AG04450 (cell line): ENCODE measurements at regions of chr7 and their contacts with region 1.

Region 1: DNA sequence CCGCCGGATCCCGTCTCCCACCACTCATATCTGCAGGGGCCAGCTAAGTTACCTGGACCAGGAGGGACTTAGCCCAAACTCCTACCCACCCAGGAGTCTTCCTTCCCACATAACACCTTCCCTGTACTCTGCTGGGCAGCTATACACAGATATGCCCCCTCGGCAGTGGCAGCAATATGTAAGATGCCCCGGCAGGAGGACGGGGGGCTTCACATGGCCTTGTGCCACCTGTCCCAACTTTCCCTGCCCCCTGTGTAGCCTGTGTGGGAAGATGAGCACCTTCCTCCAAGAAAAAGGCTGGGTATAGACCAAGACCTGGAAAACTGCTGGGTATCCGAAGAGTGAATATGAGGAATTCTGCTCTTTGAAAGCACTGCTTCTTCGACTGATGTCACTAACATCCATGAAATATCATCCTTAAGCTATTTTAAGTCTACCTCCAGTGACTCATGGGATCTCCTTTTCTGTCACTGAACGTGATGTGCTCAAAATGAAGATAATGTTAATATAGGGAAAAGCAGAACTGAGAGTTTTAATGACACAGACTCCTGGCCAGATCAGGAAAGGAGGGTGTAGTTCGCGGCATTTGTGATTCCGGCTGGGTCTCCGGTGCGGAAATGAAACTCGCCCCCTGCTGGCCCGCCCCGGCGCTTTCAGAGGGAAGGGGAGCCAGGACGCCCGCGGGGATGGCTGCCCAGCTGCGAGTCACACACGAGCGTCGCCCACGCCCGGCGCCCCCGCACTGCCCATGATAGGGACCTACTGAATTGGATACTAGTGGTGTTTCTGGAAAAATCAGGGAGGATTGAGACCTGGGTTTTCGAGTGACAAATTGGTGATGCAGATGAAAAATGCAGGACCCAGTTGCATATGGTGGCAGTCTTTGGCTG is 256.9 kb upstream of the NFE2L3 start:
- DNase-seq: no peak
- H3K4me3 ChIP-seq: no peak overlapping the region
- H3K27ac ChIP-seq: no peak overlapping the region
- H3K27me3 ChIP-seq: peaks cover 17% of the 10 kb centered on the region
- CTCF ChIP-seq: peak; percentile 70

Region 2: DNA sequence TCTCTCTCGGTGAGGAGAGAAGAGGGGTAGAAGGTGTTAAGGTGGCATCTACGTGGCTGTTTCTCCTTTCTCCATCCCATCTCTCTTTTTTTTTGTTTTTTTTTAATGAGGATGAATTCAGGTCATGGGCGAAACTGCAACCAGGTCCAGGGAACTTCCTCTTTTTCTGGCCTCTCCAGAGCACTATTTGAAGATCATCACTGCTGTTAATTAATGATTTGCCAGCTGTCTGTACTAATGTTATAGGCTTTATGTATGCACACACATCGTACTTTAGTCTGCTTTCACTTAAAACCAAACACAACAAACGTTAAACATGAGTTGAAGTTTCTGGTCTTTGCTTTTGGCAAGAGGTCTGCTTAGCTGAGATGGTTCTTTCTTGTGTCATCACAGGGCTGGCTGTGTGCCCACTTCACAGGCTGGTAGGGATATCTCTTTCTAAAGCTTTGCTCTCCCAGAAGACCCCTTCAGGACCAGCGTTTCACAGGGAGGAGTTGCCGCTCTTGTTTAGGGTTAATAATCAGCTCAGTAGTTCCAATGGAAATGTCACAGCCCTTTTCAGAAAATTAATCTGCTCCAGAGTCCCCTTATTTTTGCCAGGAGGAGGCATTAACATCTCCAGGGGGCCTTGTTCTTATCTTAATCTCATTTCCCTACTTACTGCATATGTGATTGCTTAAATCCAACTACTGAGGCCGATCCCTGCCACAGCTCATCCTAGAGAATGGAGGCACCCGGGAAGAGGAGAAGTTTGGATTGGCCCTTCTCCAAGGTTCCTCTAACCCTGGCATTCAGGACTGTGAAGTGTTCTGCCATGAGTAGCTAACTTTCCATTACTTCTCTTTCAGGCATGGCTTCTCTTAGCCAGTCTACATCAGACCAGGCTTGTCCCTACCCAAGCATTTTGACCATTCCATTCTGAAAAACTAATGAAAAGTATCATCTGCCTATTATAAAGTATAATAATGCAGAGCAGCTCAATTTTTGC is 17.1 kb before region 1 on chr7:
- CTCF ChIA-PET with region 1: interaction called, 92 read pairs
- POLR2A ChIA-PET with region 1: no interaction called
- DNase-seq: no peak
- H3K4me3 ChIP-seq: no peak overlapping the region
- H3K27ac ChIP-seq: no peak overlapping the region
- H3K27me3 ChIP-seq: peaks cover 33% of the 10 kb centered on the region
- CTCF ChIP-seq: no peak

Region 3: DNA sequence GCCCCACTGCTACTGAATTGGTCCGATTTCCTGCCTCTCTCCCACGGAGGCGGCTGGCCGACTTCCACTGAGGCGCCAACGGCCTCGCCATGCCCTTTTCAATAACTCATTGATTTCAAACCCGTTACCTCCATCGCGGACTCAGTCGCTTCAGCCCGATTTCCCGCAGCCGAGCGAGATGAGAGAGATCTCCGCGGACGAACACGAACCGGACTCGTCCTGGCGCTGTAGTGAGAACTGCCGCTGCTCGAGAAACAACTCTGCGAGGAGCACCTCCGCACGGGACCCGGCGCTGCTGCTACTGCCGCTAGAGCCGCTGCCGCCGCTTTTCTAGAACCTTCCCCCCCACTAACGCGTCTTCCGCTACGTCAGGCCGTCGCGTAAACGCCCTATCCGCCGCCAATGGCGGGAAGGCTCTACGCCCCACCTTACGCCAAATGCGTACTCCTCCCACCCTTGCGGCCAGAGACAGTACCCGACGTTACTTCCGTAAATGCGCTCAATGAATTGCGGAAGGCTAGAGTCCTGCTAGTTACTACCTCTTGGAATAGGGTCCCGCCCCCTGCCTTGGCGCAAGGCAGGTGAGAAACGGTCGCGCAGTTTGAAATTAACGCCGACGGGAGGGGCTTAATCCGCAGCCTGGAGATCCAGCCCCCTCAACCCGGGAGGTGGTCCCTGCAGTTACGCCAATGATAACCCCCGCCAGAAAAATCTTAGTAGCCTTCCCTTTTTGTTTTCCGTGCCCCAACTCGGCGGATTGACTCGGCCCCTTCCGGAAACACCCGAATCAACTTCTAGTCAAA is 305.5 kb after region 1 on chr7 and contains the start of gene HNRNPA2B1:
- CTCF ChIA-PET with region 1: interaction called, 18 read pairs
- POLR2A ChIA-PET with region 1: interaction called, 5 read pairs
- DNase-seq: peak; percentile 93
- H3K4me3 ChIP-seq: peak within 1 kb of the TSS; percentile 97
- H3K27ac ChIP-seq: peak within 1 kb of the TSS; percentile 96
- H3K27me3 ChIP-seq: no peaks in the 10 kb centered on the region
- CTCF ChIP-seq: no peak
- polyA plus RNA-seq, gene HNRNPA2B1: 354 and 493 TPM in 2 replicates

Region 4: DNA sequence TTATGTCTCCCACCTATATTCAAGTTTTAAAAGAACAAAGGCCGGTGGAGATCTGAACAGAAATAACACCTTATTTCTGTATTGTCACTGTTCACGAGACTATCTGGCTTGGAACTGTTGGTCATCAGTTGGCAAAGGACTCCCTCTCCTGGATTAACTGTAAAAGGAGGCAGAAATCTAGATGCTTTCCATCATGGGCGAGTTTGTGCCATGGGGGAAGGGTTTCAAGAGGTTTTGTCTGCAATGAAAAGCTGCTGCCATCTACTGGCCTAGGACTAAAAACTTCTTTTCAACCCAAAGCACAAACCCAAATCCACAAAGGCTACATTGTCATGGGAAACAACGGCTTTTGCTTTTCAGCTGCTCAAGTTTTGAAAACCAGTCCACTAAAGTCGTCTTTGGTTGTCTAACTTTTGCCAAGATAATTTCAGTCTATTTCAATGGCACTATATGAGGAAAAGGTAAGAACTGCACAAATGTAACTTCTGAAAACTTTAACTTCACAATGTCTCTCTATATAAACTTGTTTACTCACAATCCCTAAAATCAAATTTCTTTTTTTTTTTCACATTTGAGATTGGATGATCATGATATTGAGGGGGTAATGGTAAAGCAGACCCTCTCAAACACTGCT is 772.5 kb after region 1 on chr7:
- CTCF ChIA-PET with region 1: interaction called, 70 read pairs
- POLR2A ChIA-PET with region 1: no interaction called
- DNase-seq: peak; percentile 56
- H3K4me3 ChIP-seq: no peak overlapping the region
- H3K27ac ChIP-seq: no peak overlapping the region
- H3K27me3 ChIP-seq: no peaks in the 10 kb centered on the region
- CTCF ChIP-seq: peak; percentile 92

Region 5: GRCh38 chr7:27173956-27174873 is 1279.1 kb after region 1 on chr7 and contains the start of gene HOXA10:
- CTCF ChIA-PET with region 1: interaction called, 25 read pairs
- POLR2A ChIA-PET with region 1: no interaction called
- DNase-seq: no peak
- H3K4me3 ChIP-seq: peak within 1 kb of the TSS; percentile 25
- H3K27ac ChIP-seq: no peak within 1 kb of the TSS
- H3K27me3 ChIP-seq: peaks cover 88% of the 10 kb centered on the region
- CTCF ChIP-seq: no peak
- polyA plus RNA-seq, gene HOXA10: 0.36 and 0.47 TPM in 2 replicates

Region 6: DNA sequence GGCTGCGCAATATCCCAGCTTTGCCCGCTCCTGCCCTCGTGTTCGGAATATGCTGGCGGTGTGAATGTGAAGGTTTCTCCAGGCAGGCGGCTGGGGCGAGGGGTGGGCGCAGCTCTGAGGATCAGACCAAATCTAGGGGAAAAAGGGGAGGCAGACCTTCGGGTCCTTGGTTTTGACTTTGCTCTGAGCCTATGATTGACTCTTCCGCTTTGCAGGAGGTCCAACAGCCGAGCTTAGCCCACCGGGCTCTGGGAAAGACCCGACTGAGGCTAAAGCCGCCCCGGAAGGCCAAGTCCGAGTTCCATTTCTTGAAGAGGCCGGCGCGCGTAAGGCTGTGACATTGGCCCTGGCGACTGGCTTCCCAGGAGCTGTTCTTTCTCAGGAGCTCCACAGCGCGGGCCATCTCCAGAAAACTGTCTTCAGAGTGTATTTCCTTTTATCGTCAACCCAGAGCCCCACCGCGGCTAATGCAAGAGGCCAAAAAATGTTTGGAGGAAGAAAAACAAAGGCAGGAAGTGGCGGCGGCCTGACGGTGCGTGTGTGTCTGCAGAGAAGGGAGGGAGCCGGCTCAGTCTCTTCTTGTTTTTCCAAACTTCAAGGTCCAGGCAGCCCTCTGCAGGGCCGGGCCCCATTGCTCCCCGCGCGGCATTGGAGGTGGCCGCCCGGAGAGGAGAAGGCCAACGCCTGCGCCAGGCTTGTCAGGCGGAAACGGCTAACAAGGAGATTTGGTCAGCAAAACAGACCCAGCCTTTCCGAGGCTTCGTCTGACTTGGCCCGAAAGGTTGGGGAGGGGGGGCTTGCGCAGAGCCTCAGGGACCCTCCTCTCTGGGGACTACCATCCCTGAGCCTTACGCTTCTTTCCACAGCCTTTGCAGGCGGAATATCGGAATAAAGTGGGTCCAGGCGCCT is 1293.5 kb after region 1 on chr7:
- CTCF ChIA-PET with region 1: interaction called, 10 read pairs
- POLR2A ChIA-PET with region 1: no interaction called
- DNase-seq: no peak
- H3K4me3 ChIP-seq: no peak overlapping the region
- H3K27ac ChIP-seq: no peak overlapping the region
- H3K27me3 ChIP-seq: peaks cover 96% of the 10 kb centered on the region
- CTCF ChIP-seq: no peak